ENCODE measurements at regions of chr2 and their contacts with region 1.

Region 1: GRCh38 chr2:64750817-64751285 is 97.1 kb upstream of the SERTAD2 start:
- DNase-seq: peak; percentile 97
- H3K4me3 Mint-ChIP-seq: peak overlapping the region; percentile 91
- H3K27ac Mint-ChIP-seq: peak overlapping the region; percentile 98
- H3K4me1 Mint-ChIP-seq: peaks cover 34% of the 10 kb centered on the region
- H3K27me3 Mint-ChIP-seq: no peaks in the 10 kb centered on the region

Region 2: GRCh38 chr2:63283273-63283672 is 1467.6 kb before region 1 on chr2:
- intact Hi-C with region 1: no loop called
- DNase-seq: no peak
- H3K4me3 Mint-ChIP-seq: no peak overlapping the region
- H3K27ac Mint-ChIP-seq: no peak overlapping the region
- H3K4me1 Mint-ChIP-seq: no peaks in the 10 kb centered on the region
- H3K27me3 Mint-ChIP-seq: no peaks in the 10 kb centered on the region

Region 3: GRCh38 chr2:64463781-64464180 is 287.1 kb before region 1 on chr2:
- intact Hi-C with region 1: no loop called
- DNase-seq: no peak
- H3K4me3 Mint-ChIP-seq: no peak overlapping the region
- H3K27ac Mint-ChIP-seq: no peak overlapping the region
- H3K4me1 Mint-ChIP-seq: no peaks in the 10 kb centered on the region
- H3K27me3 Mint-ChIP-seq: peaks cover 4% of the 10 kb centered on the region

Region 4: GRCh38 chr2:64574871-64575270 is 176.0 kb before region 1 on chr2:
- intact Hi-C with region 1: no loop called
- DNase-seq: no peak
- H3K4me3 Mint-ChIP-seq: no peak overlapping the region
- H3K27ac Mint-ChIP-seq: peak overlapping the region; percentile 45
- H3K4me1 Mint-ChIP-seq: peaks cover 12% of the 10 kb centered on the region
- H3K27me3 Mint-ChIP-seq: no peaks in the 10 kb centered on the region

Region 5: GRCh38 chr2:64609227-64609941 is 141.5 kb before region 1 on chr2:
- intact Hi-C with region 1: loop called (anchors 1 kb)
- DNase-seq: peak; percentile 67
- H3K4me3 Mint-ChIP-seq: peak overlapping the region; percentile 68
- H3K27ac Mint-ChIP-seq: peak overlapping the region; percentile 29
- H3K4me1 Mint-ChIP-seq: peaks cover 28% of the 10 kb centered on the region
- H3K27me3 Mint-ChIP-seq: peaks cover 11% of the 10 kb centered on the region

Region 6: DNA sequence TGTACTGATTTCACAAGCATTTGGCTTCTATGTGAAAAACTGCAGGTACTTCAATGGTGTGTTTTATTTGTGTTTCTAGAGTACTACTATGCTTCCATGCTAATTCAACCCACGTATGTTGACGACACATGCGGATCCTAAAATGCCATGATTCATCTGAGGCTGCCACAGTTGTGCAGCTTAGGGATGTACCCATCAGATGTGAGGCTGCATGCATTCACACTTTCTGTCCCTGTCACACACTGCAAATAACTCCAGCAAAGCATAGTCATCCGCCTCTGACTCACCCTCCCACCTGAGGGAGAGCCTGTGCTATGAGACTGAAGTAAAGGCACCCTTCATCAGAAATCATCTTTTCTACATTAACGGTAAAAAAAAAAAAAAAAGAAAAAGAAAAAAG is 75.0 kb before region 1 on chr2:
- intact Hi-C with region 1: loop called (anchors 1 kb)
- DNase-seq: peak; percentile 30
- H3K4me3 Mint-ChIP-seq: no peak overlapping the region
- H3K27ac Mint-ChIP-seq: peak overlapping the region; percentile 56
- H3K4me1 Mint-ChIP-seq: peaks cover 48% of the 10 kb centered on the region
- H3K27me3 Mint-ChIP-seq: no peaks in the 10 kb centered on the region

Region 7: DNA sequence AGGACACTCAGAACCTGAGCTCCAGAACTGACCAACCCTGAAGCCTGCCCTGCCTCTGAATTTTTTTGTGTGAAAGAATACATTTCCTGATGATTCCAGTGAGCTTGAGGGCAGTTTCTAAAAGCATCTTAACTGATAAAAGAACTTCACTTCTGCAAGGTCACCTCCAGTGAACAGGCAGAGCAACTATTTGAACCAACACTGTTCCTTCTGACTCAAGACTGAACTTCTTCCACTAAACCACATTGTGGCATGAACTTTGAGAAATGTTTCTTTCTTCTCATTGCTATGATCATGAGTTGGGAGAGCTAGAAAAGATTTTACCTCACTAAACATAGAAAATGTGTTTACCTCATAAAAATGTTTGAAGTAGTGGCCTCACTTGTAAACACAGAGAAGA is 13.3 kb before region 1 on chr2:
- intact Hi-C with region 1: loop called (anchors 1 kb)
- DNase-seq: no peak
- H3K4me3 Mint-ChIP-seq: peak overlapping the region; percentile 46
- H3K27ac Mint-ChIP-seq: peak overlapping the region; percentile 91
- H3K4me1 Mint-ChIP-seq: peaks cover 54% of the 10 kb centered on the region
- H3K27me3 Mint-ChIP-seq: no peaks in the 10 kb centered on the region

Region 8: DNA sequence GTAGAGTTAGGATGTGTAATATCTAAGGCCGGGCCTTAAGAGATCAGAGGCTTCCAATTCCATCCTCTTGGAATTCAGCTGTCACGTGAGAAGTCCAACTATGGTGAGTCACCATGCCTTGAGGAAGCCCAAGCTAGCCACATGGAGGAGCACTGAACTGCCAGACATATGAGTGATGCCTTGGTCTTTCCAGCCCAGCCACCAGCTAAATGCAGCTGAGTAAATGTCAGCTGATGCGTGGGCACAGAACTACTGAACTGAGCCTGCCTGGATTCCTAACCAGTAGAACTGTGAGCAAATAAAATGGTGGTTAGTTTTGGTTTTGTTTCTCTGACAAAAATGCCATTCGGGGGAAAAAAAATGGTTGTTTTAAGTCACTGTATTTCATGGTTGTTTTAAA is 56.6 kb after region 1 on chr2:
- intact Hi-C with region 1: loop called (anchors 5 kb)
- DNase-seq: peak; percentile 12
- H3K4me3 Mint-ChIP-seq: peak overlapping the region; percentile 57
- H3K27ac Mint-ChIP-seq: peak overlapping the region; percentile 80
- H3K4me1 Mint-ChIP-seq: peaks cover 37% of the 10 kb centered on the region
- H3K27me3 Mint-ChIP-seq: no peaks in the 10 kb centered on the region

Region 9: DNA sequence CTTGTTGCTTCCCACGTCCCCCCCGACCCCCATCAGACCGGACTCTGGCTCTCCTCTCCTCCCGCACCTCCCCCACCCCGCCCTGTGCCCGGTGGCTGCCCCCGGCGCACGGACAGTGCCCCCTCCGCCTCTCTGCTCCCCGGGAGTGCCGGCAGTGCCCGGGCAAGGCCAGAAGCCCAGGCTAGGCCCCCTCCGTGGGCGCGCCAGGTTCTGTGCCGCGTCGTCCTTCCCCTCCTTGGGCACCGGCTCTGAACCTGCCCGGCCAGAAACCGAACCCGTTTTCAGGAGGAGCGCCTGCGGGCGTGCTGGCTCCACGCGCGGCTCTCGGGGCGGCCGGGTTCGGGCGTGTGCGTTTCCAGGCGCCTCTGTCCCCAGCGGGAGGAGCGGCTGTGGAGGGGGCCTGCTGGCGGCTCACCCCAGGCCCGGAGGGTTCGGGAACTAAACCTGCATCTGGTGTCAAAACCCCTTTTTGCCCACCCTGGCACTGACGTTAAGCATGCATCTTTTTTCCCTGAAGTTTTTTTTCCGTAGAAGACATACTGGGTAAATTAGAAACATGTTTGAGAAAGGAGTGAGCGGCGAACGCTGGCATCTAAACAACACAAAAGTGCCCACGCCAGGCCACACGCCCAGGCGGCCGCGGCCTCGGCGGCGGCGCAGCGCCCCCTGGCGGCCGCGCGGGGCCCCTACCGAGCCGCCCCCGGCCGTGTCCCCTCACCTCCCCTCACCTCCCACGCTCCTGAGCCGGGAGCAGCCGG is 114.4 kb after region 1 on chr2:
- intact Hi-C with region 1: loop called (anchors 1 kb)
- DNase-seq: peak; percentile 61
- H3K4me3 Mint-ChIP-seq: peak overlapping the region; percentile 78
- H3K27ac Mint-ChIP-seq: peak overlapping the region; percentile 60
- H3K4me1 Mint-ChIP-seq: peaks cover 6% of the 10 kb centered on the region
- H3K27me3 Mint-ChIP-seq: peaks cover 13% of the 10 kb centered on the region

Region 10: GRCh38 chr2:65129826-65130663 is 379.2 kb after region 1 on chr2 and contains the start of gene RAB1A:
- intact Hi-C with region 1: loop called (anchors 10 kb)
- DNase-seq: peak; percentile 98
- H3K4me3 Mint-ChIP-seq: peak within 1 kb of the TSS; percentile 98
- H3K27ac Mint-ChIP-seq: peak within 1 kb of the TSS; percentile 99
- H3K4me1 Mint-ChIP-seq: peaks cover 30% of the 10 kb centered on the region
- H3K27me3 Mint-ChIP-seq: peaks cover 16% of the 10 kb centered on the region
- total RNA-seq, gene RAB1A: 73.4 and 81.6 TPM in 2 replicates

Measured in activated T-helper 1 cell treated with anti-CD3 and anti-CD28 coated beads, Interleukin-12 subunit alpha, Interleukin-12 subunit beta, Interleukin-2, Interleukin-4 antibody, amounts not matched to agents 30 ng/mL and 10 ng/mL and 1 ng/mL, durations not matched to agents 14 hours and 24 hours and 36 hours (primary cell).